ENCODE measurements at regions of chr6 and their contacts with region 1.

Region 1: GRCh38 chr6:36432151-36432633 is 10.5 kb downstream of the PXT1 start:
- DNase-seq: no peak
- H3K4me3 ChIP-seq: no peak overlapping the region
- H3K27ac ChIP-seq: no peak overlapping the region
- H3K4me1 ChIP-seq: no peaks in the 10 kb centered on the region
- H3K27me3 ChIP-seq: no peaks in the 10 kb centered on the region
- CTCF ChIP-seq: no peak
- POLR2A ChIP-seq: no peak

Region 2: GRCh38 chr6:36368921-36369865 is 63.0 kb before region 1 on chr6:
- intact Hi-C with region 1: no loop called
- DNase-seq: no peak
- H3K4me3 ChIP-seq: no peak overlapping the region
- H3K27ac ChIP-seq: no peak overlapping the region
- H3K4me1 ChIP-seq: no peaks in the 10 kb centered on the region
- H3K27me3 ChIP-seq: no peaks in the 10 kb centered on the region
- CTCF ChIP-seq: no peak
- POLR2A ChIP-seq: no peak

Region 3: DNA sequence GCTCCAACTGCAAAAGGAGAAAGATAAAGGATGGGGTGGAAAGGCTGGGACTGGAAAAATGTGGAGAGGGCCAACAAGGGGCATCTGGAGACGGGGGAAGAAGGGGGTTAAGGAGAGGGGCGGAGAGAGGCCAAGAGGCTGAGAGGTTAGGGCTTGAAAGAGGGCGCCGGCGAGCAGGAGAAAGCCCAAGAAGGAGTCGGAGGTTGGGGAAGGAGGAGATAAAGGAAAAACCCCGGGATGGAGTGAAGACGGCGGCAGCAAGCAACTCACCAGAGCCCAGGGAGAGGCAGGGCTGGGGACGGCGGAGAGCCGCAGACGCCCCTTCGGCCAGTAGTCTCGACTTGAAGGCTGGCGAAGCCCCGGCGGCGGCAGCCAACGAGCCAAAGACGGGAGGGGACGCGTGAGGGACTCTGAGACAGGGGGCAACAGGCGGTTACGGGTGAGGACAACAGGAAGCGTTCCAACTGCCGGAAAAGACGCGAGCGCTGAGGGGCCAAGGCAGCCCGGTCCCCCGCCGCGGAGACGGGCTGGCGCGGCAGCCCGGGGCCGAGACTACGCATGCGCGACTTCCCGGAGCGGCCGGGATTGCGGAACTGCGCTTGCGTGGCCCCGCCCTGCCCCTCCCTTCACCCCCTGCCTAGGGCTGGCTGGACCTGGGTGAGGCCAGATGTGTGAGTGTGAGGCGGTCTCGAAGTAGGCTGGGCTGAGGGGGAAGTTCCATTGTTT is 114.9 kb after region 1 on chr6 and contains the start of gene STK38:
- intact Hi-C with region 1: loop called (anchors 10 kb)
- DNase-seq: peak; percentile 90 to 91
- H3K4me3 ChIP-seq: peak within 1 kb of the TSS; percentile 89 to 100 (median 95)
- H3K27ac ChIP-seq: peak within 1 kb of the TSS; percentile 91 to 94 (median 93)
- H3K4me1 ChIP-seq: peaks cover 8 to 25% of the 10 kb centered on the region in 2 donors
- H3K27me3 ChIP-seq: no peaks in the 10 kb centered on the region
- CTCF ChIP-seq: peak in 1 of 6 experiments; percentile 8
- POLR2A ChIP-seq: peak; percentile 85 to 97
- total RNA-seq, gene STK38: 11.9 to 21.9 (median 14.1) TPM

Region 4: GRCh38 chr6:36570264-36570663 is 138.1 kb after region 1 on chr6:
- intact Hi-C with region 1: no loop called
- DNase-seq: no peak
- H3K4me3 ChIP-seq: no peak overlapping the region
- H3K27ac ChIP-seq: no peak overlapping the region
- H3K4me1 ChIP-seq: no peaks in the 10 kb centered on the region
- H3K27me3 ChIP-seq: no peaks in the 10 kb centered on the region
- CTCF ChIP-seq: no peak
- POLR2A ChIP-seq: no peak

Region 5: DNA sequence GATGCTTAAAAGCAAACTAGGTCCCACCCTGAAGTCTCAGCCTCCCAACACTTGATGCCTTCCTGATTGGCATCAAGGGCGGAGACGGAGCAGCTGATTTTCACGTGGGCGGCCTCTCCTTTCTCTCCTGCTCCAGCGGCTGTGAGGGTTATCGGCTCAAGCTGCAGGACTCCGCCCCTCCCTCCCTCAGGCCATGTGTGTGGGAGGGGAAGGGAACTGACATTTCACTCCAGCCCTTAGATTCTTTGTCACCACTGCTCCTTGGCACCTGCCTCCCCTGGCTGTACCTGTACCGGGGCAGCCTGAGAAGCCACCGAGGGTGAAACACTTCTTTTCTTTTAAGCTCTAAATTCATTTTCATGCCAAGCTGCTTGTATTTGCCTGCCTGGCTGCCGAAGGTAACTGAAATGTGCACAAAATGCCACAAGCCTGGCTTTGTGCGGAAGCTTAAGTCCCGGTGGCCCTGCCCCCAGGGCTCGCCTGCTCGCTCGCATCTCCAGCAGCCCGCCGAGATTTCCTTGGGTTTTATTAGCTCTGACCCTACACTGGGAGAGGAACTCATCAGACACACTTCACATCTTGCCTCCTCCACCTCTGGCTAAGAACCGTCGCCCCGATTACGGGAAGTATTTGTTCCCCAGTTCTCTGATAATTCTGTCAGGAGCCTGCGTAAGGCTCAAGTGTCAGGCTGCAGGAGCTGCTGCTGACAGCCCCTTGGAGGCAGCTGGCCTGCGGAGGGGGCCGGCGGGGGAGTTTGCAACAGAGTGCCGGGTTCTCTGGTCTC is 416.7 kb after region 1 on chr6:
- intact Hi-C with region 1: no loop called
- DNase-seq: peak; percentile 76 to 82
- H3K4me3 ChIP-seq: no peak overlapping the region
- H3K27ac ChIP-seq: no peak overlapping the region
- H3K4me1 ChIP-seq: peaks cover 6 to 9% of the 10 kb centered on the region in 2 donors
- H3K27me3 ChIP-seq: no peaks in the 10 kb centered on the region
- CTCF ChIP-seq: no peak
- POLR2A ChIP-seq: no peak

Measured in thyroid gland (tissue), 4 donors.